ENCODE measurements at regions of chr3 and their contacts with region 1.

Region 1: DNA sequence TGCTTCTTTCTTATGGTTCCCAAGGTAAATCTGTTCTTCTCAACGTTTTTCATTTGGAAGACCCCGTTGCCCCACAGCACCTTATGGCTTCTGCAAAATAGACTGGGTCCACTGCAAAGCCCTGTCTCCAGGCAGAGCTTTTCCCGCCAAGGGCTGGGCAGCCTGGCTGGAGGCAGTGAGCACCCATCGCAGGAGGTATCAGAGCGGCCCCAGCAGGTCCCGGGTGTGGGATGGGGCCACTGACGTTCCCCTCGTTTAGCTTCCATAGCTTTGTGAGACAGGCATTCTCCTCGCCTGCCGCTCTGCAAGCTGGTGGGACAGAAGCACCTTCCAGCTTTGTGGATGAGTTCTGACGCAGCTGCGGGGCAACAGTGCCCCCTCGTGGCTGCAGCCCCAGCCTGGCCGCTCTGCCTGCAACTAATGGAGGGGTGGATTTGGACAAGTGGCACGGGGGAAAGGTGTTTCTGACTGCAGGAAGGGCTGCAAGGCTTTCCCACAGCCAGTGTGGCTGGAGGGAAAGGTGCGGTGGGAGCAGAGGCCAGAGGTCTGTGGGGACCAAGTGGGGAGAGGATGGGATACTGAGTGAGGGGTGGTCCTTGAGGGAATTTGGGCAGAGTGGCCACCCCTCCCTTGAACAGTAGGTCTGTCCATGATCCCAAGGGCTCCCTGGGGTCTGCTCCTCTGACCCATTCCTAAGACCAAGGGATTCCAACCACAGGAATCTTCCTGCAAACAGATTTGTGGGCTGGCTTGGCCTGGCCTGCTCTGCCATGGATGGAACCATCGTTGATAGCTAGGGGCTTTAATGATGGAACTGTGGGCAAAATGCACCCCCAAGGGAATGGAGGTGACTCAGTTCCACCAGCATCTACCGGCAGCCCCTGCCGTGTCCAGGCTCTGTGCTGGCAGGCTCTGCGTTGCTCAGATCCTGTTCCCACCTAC is 99.4 kb downstream of the FBLN2 start:
- DNase-seq: peak; percentile 81 to 95
- H3K4me3 ChIP-seq: no peak overlapping the region
- H3K27ac ChIP-seq: no peak overlapping the region
- H3K4me1 ChIP-seq: peaks cover 5 to 24% (median 22%) of the 10 kb centered on the region in 4 donors
- H3K27me3 ChIP-seq: peaks cover 0 to 21% (median 18%) of the 10 kb centered on the region in 3 donors
- CTCF ChIP-seq: peak in 5 of 7 experiments; percentile 88 to 92 (median 91)
- EP300 ChIP-seq: no peak
- POLR2A ChIP-seq: no peak

Region 2: GRCh38 chr3:13091898-13092611 is 556.3 kb before region 1 on chr3:
- intact Hi-C with region 1: loop called (anchors 10 kb)
- DNase-seq: peak; percentile 92
- H3K4me3 ChIP-seq: no peak overlapping the region
- H3K27ac ChIP-seq: no peak overlapping the region
- H3K4me1 ChIP-seq: peaks cover 0 to 13% (median 11%) of the 10 kb centered on the region in 4 donors
- H3K27me3 ChIP-seq: peaks cover 0 to 4% (median 0%) of the 10 kb centered on the region in 3 donors
- CTCF ChIP-seq: peak in 5 of 7 experiments; percentile 89 to 99 (median 95)
- EP300 ChIP-seq: no peak
- POLR2A ChIP-seq: no peak

Region 3: DNA sequence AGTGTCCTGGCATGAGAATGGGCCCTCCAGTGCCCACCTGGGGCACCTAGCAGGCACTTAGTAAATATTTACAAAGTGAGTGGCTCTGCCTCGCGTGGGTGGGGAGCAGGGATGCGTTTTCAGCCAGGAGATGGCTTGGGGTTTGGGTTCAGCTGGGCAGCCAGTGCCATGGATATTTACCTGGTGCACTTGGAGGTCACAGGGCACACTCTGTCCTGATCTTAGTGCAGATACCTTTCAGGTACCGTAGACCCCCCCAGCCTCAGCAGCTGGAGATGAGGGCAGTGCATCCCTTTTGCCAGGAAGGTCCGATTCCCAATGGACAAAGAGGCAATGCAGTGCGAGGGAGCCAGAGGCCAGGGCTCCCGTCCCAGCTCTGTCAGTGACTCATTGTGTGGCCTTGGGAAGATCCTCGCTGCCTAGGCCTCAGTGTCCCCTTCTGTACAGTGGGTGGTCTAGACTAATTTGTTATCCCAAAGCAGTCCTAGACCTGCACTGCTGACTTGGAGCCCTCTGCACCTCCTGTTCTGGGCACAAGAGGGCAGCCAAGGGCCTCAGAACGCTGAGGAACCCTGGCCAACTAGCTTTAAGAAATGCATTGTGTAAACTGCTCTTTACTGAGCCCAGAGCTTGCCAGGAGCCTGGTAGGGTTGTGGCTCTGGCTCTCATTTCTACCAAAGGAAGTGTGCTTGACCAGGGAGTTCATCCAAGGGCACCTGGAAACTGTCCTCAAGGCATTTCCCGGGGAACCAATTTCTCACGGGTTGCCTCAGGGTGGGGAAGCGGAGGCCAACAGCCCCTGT is 152.2 kb before region 1 on chr3:
- intact Hi-C with region 1: loop called (anchors 5 kb)
- DNase-seq: peak; percentile 86 to 93
- H3K4me3 ChIP-seq: no peak overlapping the region
- H3K27ac ChIP-seq: peak overlapping the region in 2 of 5 donors; percentile 34 to 35
- H3K4me1 ChIP-seq: peaks cover 0 to 21% (median 12%) of the 10 kb centered on the region in 4 donors
- H3K27me3 ChIP-seq: no peaks in the 10 kb centered on the region
- CTCF ChIP-seq: peak in 5 of 7 experiments; percentile 87 to 95 (median 91)
- EP300 ChIP-seq: no peak
- POLR2A ChIP-seq: no peak

Region 4: GRCh38 chr3:13711906-13712650 is 63.7 kb after region 1 on chr3:
- intact Hi-C with region 1: no loop called
- DNase-seq: peak in 1 of 2 donors; percentile 7
- H3K4me3 ChIP-seq: no peak overlapping the region
- H3K27ac ChIP-seq: no peak overlapping the region
- H3K4me1 ChIP-seq: no peaks in the 10 kb centered on the region
- H3K27me3 ChIP-seq: peaks cover 0 to 3% (median 0%) of the 10 kb centered on the region in 3 donors
- CTCF ChIP-seq: no peak
- EP300 ChIP-seq: no peak
- POLR2A ChIP-seq: no peak

Region 5: GRCh38 chr3:13884851-13885703 is 236.7 kb after region 1 on chr3:
- intact Hi-C with region 1: loop called (anchors 10 kb)
- DNase-seq: peak; percentile 68 to 83
- H3K4me3 ChIP-seq: no peak overlapping the region
- H3K27ac ChIP-seq: no peak overlapping the region
- H3K4me1 ChIP-seq: peaks cover 6 to 9% (median 9%) of the 10 kb centered on the region in 4 donors
- H3K27me3 ChIP-seq: peaks cover 8 to 40% (median 24%) of the 10 kb centered on the region in 3 donors
- CTCF ChIP-seq: peak in 5 of 7 experiments; percentile 25 to 59 (median 46)
- EP300 ChIP-seq: no peak
- POLR2A ChIP-seq: no peak